HEK293 (cell line): ENCODE measurements at regions of chr15 and their contacts with region 1.

Region 1: DNA sequence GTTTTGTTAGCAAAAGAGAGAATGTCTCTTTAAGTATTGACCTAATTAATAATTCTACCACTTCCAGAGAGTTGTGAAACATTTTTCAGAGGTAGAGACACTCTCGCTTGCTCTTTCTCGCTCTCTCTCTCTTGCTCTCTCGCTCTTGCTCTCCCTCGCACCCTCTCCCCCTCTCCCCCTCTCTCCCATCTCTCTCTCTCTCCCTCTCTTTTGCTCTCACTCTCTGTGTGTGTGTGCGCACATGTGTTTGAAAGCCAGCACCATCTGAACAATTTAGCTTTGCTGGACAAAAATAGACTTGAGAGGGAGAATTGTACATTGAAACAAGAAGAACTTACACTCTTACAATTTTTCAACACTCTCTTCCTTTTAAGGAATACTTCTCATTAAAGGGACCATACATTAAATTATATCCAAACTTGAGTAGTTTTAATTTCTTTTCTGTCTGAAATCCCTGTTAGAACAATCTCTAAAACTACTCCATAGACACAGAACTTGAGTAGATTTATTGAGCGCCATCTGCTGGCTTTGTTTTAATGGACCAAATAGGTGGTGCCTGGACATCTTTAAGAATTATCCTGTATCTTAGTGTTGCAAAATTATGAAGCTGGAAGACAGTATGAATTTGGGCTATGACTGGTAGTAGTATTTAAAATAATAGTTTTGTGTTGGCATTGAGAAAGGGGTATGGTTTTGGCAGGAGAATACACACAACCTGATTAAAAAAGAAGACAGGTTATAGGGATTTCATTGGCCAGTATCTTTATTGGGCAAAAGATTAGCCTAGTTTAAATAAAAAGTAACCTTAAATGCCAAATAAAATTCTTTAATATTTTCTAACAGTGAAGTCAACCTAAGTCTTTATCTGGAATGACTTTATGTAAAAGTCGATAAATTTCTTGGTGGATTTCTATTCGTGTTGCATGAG is 124.6 kb downstream of the AKAP13 start:
- H3K4me3 ChIP-seq: no peak overlapping the region
- H3K27ac ChIP-seq: no peak overlapping the region
- H3K4me1 ChIP-seq: peaks cover 3% of the 10 kb centered on the region; the same call in 1 of the 2 replicates
- CTCF ChIP-seq: no peak

Region 2: DNA sequence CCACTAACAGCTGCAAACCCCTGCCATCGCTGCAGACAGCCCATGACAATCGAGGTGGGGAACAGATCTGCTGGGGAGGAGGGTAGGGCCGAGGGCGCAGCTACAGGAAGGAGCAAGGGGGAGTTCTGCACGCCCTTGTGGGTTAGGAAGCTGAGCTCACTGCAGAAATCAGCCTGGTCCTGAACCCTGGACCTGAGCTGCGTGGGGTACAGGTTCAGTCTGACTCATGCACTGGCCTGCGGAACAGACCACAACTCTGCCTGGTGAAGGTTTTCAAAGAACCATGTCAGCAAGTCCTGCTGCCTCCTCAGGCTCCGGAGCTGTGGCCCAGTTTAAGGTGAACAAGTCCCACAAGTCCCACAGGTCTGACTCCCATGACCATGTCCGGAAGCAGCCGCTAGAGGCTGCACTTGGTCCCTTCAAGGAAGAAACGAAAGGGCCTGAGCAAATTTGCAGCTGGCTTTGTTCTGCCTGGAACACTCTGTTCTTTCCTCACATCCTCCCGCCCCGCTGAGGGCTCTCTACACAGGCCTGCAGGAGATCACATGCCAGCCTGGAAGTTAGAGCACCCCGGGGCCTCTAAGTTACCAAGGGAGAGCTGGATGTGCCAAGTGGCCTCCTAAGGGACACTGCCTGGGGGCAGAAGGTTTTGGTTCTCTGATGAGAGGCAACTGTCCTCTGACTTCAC is 174.0 kb before region 1 on chr15:
- CTCF ChIA-PET with region 1: interaction called, 30 read pairs
- POLR2A ChIA-PET with region 1: no interaction called
- H3K4me3 ChIP-seq: no peak overlapping the region
- H3K27ac ChIP-seq: no peak overlapping the region
- H3K4me1 ChIP-seq: 0 out of 2 replicates have a peak, but pooled peaks cover 2% of the 10 kb centered on the region
- CTCF ChIP-seq: peak; percentile 27; the same call in 1 of the 2 replicates

Region 3: GRCh38 chr15:85485956-85486567 is 19.0 kb before region 1 on chr15:
- CTCF ChIA-PET with region 1: interaction called, 44 read pairs
- POLR2A ChIA-PET with region 1: interaction called, 4 read pairs
- H3K4me3 ChIP-seq: no peak overlapping the region
- H3K27ac ChIP-seq: no peak overlapping the region
- H3K4me1 ChIP-seq: peaks cover 6% of the 10 kb centered on the region
- CTCF ChIP-seq: peak; percentile 49; the same call in 1 of the 2 replicates

Region 4: GRCh38 chr15:85515212-85515611 is 10.2 kb after region 1 on chr15:
- CTCF ChIA-PET with region 1: interaction called, 13 read pairs
- POLR2A ChIA-PET with region 1: no interaction called
- H3K4me3 ChIP-seq: no peak overlapping the region
- H3K27ac ChIP-seq: no peak overlapping the region
- H3K4me1 ChIP-seq: peaks cover 24% of the 10 kb centered on the region
- CTCF ChIP-seq: no peak

Region 5: GRCh38 chr15:85527895-85528294 is 22.9 kb after region 1 on chr15:
- CTCF ChIA-PET with region 1: interaction called, 11 read pairs
- POLR2A ChIA-PET with region 1: no interaction called
- H3K4me3 ChIP-seq: no peak overlapping the region
- H3K27ac ChIP-seq: no peak overlapping the region
- H3K4me1 ChIP-seq: peaks cover 10% of the 10 kb centered on the region
- CTCF ChIP-seq: no peak